ENCODE measurements at regions of chr5 and their contacts with region 1.

Region 1: DNA sequence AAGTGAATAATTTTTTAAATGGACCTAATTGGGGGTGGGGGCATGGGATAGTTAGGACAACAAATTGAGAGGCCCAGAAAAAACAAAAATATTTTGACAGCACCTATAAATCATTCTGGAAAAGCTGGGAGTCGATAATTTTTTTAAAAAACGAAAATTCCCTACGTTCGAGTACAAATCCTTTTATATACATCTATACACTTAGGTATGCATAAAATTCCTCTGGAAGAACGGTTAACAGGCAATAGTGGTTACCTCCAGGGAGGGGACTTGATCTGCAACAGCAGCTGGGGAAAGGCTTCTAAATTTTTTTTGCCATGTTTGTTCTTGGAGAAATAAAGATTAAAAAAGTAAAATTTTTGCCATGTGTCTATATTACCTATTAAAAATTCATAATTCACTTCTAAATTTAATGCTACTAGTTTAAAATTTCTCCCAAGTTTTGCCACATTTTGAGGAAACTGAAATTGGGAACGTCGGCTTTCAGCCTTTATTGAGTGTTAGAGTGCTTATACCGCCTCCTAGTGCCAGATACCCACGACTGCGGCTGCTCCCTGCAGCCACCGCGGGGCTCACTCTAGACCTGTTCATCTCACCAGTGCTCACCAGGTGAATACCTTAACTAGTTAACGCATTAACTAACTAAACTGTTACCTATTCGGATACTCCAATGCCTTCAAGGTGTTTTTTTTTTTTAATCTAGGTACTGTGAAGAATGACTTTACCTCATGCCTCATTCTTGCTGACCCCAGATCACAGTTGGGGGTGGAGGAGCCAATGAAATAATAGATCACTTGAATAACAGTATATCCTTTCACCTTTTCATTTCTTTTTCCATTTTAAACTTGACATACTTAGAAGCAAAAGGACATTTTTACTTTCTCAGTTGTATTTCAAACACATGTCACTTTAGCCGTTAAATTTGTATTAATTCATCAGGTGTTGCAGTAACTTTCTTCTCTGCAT is 1.8 kb upstream of the BHMT start:
- DNase-seq: peak; percentile 21 to 50
- ATAC-seq: peak in 3 of 4 donors; percentile 66 to 75 (median 68)
- H3K4me3 ChIP-seq: no peak overlapping the region
- H3K27ac ChIP-seq: no peak overlapping the region
- H3K4me1 ChIP-seq: no peaks in the 10 kb centered on the region
- H3K27me3 ChIP-seq: peaks cover 0 to 37% (median 12%) of the 10 kb centered on the region in 3 donors
- CTCF ChIP-seq: peak; percentile 36

Region 2: GRCh38 chr5:79062436-79062835 is 47.4 kb before region 1 on chr5:
- intact Hi-C with region 1: loop called in 1 of 2 experiments (anchors 5 kb)
- DNase-seq: no peak
- ATAC-seq: no peak
- H3K4me3 ChIP-seq: no peak overlapping the region
- H3K27ac ChIP-seq: no peak overlapping the region
- H3K4me1 ChIP-seq: no peaks in the 10 kb centered on the region
- H3K27me3 ChIP-seq: no peaks in the 10 kb centered on the region
- CTCF ChIP-seq: no peak

Measured in psoas muscle (tissue), 8 donors.